Heart right ventricle (tissue), 16 donors: ENCODE measurements at regions of chr2 and their contacts with region 1.

Region 1: GRCh38 chr2:220855296-220855695 is 716.8 kb downstream of the EPHA4 start:
- DNase-seq: peak in 1 of 2 donors; percentile 48
- ATAC-seq: peak; percentile 74 to 93 (median 88)
- H3K4me3 ChIP-seq: no peak overlapping the region
- H3K27ac ChIP-seq: no peak overlapping the region
- H3K4me1 ChIP-seq: peaks cover 0 to 25% (median 10%) of the 10 kb centered on the region in 9 donors
- H3K27me3 ChIP-seq: no peaks in the 10 kb centered on the region
- CTCF ChIP-seq: no peak

Region 2: DNA sequence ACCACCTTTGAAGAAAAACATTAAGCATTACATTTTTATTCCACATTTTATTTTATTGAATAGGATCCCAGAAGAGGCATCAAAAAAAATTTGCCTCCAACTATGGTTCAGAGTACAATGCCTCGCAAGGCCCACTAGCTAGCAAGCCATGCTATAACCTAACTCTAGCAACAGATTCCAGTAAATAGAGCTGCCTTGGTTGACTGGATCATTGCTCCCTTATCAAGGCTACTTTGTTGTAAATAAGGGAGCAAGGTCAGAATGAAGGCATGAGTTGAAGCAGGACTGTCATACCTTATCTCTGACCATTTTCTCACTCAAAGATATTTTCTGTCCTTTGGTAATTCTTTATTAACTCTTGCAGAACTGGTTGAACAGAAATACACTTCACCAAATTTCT is 44.2 kb after region 1 on chr2:
- intact Hi-C with region 1: loop called in 1 of 10 experiments (anchors 1 kb)
- DNase-seq: no peak
- ATAC-seq: peak in 6 of 8 donors; percentile 52 to 84 (median 70)
- H3K4me3 ChIP-seq: no peak overlapping the region
- H3K27ac ChIP-seq: no peak overlapping the region
- H3K4me1 ChIP-seq: peaks cover 0 to 10% (median 0%) of the 10 kb centered on the region in 9 donors
- H3K27me3 ChIP-seq: no peaks in the 10 kb centered on the region
- CTCF ChIP-seq: no peak

Region 3: GRCh38 chr2:221104361-221104811 is 249.1 kb after region 1 on chr2:
- intact Hi-C with region 1: loop called in 1 of 10 experiments (anchors 10 kb)
- DNase-seq: peak; percentile 84 to 85
- ATAC-seq: peak; percentile 93 to 99 (median 98)
- H3K4me3 ChIP-seq: peak overlapping the region in 7 of 10 donors; percentile 8 to 36 (median 13)
- H3K27ac ChIP-seq: peak overlapping the region in 9 of 10 donors; percentile 30 to 80 (median 71)
- H3K4me1 ChIP-seq: peaks cover 10 to 31% (median 21%) of the 10 kb centered on the region in 9 donors
- H3K27me3 ChIP-seq: peaks cover 0 to 2% (median 0%) of the 10 kb centered on the region in 7 donors
- CTCF ChIP-seq: peak in 7 of 9 donors; percentile 11 to 49 (median 34)